ENCODE measurements at regions of chr2 and their contacts with region 1.

Region 1: GRCh38 chr2:167733747-167734146 is 513.6 kb downstream of the STK39 start:
- DNase-seq: no peak
- H3K4me3 Mint-ChIP-seq: no peak overlapping the region
- H3K27ac Mint-ChIP-seq: no peak overlapping the region
- H3K4me1 Mint-ChIP-seq: no peaks in the 10 kb centered on the region
- H3K27me3 Mint-ChIP-seq: no peaks in the 10 kb centered on the region
- CTCF ChIP-seq: no peak

Region 2: DNA sequence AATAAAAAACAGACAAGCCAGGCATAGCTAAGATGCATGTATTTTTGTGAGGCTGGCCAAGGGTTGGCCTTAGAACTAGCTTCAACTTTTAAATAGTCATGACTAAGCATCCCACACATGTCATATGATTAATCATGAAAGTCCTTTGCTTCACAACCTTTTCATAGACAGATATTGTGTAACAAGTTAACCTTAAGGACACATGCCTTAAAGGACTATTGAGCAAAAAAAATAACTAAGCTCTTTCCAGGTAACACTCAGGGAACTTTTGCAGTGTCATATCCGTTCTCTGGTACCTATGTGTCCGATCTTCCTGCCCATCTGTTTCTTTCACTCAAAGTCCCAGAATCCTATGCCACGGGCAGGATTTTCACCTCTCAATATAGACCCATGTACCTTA is 15.3 kb after region 1 on chr2:
- CTCF ChIA-PET with region 1: no interaction called
- intact Hi-C with region 1: loop called (anchors 1 kb)
- DNase-seq: no peak
- H3K4me3 Mint-ChIP-seq: no peak overlapping the region
- H3K27ac Mint-ChIP-seq: no peak overlapping the region
- H3K4me1 Mint-ChIP-seq: peaks cover 14% of the 10 kb centered on the region
- H3K27me3 Mint-ChIP-seq: no peaks in the 10 kb centered on the region
- CTCF ChIP-seq: no peak